ENCODE measurements at regions of chr10 and their contacts with region 1.

Region 1: GRCh38 chr10:119445311-119445934 is 97.1 kb downstream of the RGS10 start:
- DNase-seq: peak; percentile 65
- ATAC-seq: peak; percentile 85
- H3K4me3 ChIP-seq: no peak overlapping the region
- H3K27ac ChIP-seq: no peak overlapping the region
- H3K4me1 ChIP-seq: no peaks in the 10 kb centered on the region
- H3K27me3 ChIP-seq: no peaks in the 10 kb centered on the region
- CTCF ChIP-seq: peak; percentile 92
- EP300 ChIP-seq: no peak
- POLR2A ChIP-seq: no peak
- RAD21 ChIP-seq: peak; percentile 77

Region 2: DNA sequence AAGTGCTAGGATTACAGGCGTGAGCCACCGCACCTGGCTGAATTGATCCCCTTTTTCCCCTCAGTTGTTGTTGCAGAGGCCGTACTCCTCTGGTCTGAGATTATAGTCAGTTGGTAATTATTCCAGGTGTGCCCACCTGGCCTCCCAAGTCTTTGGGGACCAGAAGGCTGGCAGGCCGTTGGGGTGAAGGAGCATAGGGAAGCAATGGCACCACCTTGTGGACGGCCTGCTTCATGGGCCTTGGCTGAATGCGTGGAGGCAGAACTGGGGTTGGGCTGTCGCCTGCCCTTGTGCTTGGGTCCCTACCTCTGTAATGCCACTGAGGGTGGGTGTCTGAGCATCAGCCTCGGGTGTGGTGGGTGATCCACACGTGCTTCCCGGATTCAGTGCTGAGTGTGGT is 28.6 kb before region 1 on chr10:
- CTCF ChIA-PET with region 1: no interaction called
- POLR2A ChIA-PET with region 1: no interaction called
- in situ Hi-C with region 1: no loop called
- intact Hi-C with region 1: loop called (anchors 1 kb)
- DNase-seq: peak; percentile 46
- ATAC-seq: peak; percentile 80
- H3K4me3 ChIP-seq: no peak overlapping the region
- H3K27ac ChIP-seq: no peak overlapping the region
- H3K4me1 ChIP-seq: peaks cover 16% of the 10 kb centered on the region
- H3K27me3 ChIP-seq: no peaks in the 10 kb centered on the region
- CTCF ChIP-seq: peak; percentile 97
- EP300 ChIP-seq: no peak
- POLR2A ChIP-seq: no peak
- RAD21 ChIP-seq: peak; percentile 93

Region 3: DNA sequence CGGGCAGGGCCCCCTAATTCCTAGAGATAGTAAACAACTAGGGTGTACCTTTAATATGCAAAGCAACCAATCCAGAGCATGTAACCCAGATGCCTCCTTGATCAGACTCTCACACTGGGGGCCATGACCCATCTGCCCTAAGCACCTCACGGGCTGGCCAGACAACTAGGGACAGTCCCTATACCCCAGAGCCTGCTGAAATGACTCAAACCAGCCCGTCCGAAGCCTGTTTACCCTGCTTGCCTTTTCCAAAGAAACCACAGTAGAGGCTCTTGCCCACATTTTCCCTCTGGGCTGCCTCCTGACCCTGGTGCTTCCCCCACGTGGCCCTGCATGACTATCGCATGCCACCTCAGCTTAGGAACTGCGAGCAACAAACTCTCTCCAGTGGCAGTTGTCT is 50.9 kb after region 1 on chr10:
- CTCF ChIA-PET with region 1: no interaction called
- POLR2A ChIA-PET with region 1: no interaction called
- in situ Hi-C with region 1: loop called (anchors 5 kb)
- intact Hi-C with region 1: no loop called
- DNase-seq: peak; percentile 29
- ATAC-seq: no peak; the same call in 2 of the 3 replicates
- H3K4me3 ChIP-seq: no peak overlapping the region
- H3K27ac ChIP-seq: no peak overlapping the region
- H3K4me1 ChIP-seq: peaks cover 72% of the 10 kb centered on the region
- H3K27me3 ChIP-seq: no peaks in the 10 kb centered on the region; a peak in 1 of 5 replicates
- CTCF ChIP-seq: no peak
- EP300 ChIP-seq: no peak
- POLR2A ChIP-seq: no peak
- RAD21 ChIP-seq: no peak

Measured in HepG2 (cell line).